H1 (cell line): ENCODE measurements at regions of chr17 and their contacts with region 1.

Region 1: DNA sequence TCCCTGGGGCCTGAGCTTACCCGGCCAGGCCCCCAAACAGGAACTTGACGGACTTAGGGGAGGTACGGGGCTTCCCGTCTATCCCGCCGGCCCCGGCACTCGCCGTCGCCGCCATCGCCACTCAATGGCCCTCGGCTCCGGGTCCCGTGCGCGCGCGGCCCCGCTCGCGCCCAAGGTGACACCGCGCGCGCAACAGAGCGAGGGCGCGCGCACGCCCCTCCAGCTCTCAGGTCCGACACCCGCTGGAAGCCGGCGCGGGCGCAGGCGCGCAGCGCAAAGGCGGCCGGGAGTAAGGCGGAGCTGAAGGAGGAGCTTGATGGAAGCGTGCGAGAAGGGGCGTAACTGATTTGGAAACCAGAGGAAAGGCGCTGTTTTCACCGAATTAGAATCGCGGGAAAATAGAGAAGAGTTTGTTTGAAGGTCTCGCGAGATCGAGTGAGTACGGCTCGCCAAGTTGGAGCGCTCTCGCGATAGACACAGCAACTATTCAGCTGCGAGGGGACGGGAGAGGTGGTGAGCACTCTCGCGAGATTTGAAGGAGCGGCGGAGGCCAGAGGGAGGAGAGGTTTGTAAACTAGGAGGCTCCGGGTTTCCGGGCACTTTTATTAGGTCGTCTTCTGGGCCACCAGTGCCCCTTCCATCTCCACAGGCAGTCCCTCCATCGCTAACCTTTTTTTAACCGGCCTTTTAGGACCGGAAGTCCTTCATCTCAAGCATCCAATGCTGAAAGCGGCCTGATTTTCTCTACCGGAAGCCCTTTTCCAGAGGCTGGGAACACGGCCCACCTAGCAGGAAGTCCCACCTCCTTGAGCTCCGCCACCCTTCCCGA is at the starts of genes RNF167 and SLC25A11:
- DNase-seq: peak; percentile 91 to 95
- H3K4me3 ChIP-seq: peak within 1 kb of the TSS; percentile 85 to 94 (median 90)
- H3K27ac ChIP-seq: peak within 1 kb of the TSS; percentile 88
- H3K4me1 ChIP-seq: peaks cover 0 to 11% (median 6%) of the 10 kb centered on the region in 4 experiments; a peak in 5 of 7 replicates
- H3K27me3 ChIP-seq: no peaks in the 10 kb centered on the region
- CTCF ChIP-seq: no peak
- EP300 ChIP-seq: no peak
- POLR2A ChIP-seq: peak; percentile 76 to 85
- RAD21 ChIP-seq: no peak
- total RNA-seq, gene RNF167: 140 and 147 TPM in 2 replicates
- total RNA-seq, gene SLC25A11: 55.9 and 65.2 TPM in 2 replicates

Region 2: DNA sequence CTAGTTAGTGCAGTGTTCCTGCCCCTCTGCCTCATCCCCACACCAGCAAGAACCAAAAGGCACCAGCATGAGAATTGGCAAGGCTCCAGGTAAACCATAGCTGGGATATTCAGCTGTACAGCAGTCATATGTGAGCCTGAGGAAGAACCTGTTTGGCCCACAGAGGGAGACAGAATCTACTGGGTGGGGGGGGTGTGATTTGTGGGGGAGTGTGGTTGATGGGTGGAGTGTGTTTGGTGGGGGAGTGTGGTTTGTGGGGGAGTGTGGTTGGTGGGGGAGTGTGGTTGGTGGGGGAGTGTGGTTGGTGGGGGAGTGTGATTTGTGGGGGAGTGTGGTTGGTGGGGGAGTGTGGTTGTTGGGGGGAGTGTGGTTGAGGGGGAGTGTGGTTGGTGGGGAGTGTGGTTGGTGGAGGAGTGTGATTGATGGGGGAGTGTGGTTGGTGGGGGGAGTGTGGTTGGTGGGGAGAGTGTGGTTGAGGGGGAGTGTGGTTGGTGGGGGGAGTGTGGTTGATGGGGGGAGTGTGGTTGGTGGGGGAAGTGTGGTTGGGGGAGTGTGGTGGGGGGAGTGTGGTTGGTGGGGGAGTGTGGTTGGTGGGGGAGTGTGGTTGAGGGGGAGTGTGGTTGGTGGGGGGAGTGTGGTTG is 87.3 kb before region 1 on chr17:
- CTCF ChIA-PET with region 1: no interaction called
- POLR2A ChIA-PET with region 1: no interaction called
- DNase-seq: no peak
- H3K4me3 ChIP-seq: no peak overlapping the region
- H3K27ac ChIP-seq: no peak overlapping the region
- H3K4me1 ChIP-seq: peaks cover 14 to 42% (median 35%) of the 10 kb centered on the region in 4 experiments
- H3K27me3 ChIP-seq: no peaks in the 10 kb centered on the region
- CTCF ChIP-seq: no peak
- EP300 ChIP-seq: no peak
- POLR2A ChIP-seq: no peak
- RAD21 ChIP-seq: no peak

Region 3: DNA sequence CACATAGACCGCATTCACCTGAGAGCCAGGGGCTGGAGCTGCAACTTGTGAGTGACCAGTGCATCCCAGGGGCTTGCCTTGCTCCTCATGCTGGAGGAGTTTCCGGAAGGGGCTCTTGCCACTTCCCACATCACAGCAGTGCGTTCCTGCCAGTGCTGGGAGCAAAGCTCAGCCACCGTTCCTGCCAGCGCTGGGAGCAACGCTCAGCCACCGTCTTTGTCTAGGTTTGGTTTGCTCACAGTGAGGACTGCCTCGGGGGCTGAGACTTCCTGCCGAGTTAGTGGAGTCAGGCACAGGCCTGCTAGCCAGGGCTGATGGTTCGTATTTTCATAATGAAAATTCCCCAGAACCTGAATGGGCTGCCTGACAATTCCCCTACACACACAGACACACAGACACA is 31.7 kb before region 1 on chr17:
- CTCF ChIA-PET with region 1: interaction called, 26 read pairs
- POLR2A ChIA-PET with region 1: interaction called, 49 read pairs
- DNase-seq: no peak
- H3K4me3 ChIP-seq: no peak overlapping the region
- H3K27ac ChIP-seq: no peak overlapping the region
- H3K4me1 ChIP-seq: peaks cover 2 to 12% (median 4%) of the 10 kb centered on the region in 4 experiments; a peak in 6 of 7 replicates
- H3K27me3 ChIP-seq: no peaks in the 10 kb centered on the region
- CTCF ChIP-seq: no peak
- EP300 ChIP-seq: no peak
- POLR2A ChIP-seq: no peak
- RAD21 ChIP-seq: no peak

Region 4: GRCh38 chr17:4920351-4921048 is 19.5 kb before region 1 on chr17:
- CTCF ChIA-PET with region 1: interaction called, 6 read pairs
- POLR2A ChIA-PET with region 1: interaction called, 38 read pairs
- DNase-seq: no peak
- H3K4me3 ChIP-seq: no peak overlapping the region
- H3K27ac ChIP-seq: no peak overlapping the region
- H3K4me1 ChIP-seq: peaks cover 0 to 5% (median 1%) of the 10 kb centered on the region in 4 experiments; a peak in 2 of 7 replicates
- H3K27me3 ChIP-seq: no peaks in the 10 kb centered on the region
- CTCF ChIP-seq: no peak
- EP300 ChIP-seq: no peak
- POLR2A ChIP-seq: no peak
- RAD21 ChIP-seq: no peak

Region 5: DNA sequence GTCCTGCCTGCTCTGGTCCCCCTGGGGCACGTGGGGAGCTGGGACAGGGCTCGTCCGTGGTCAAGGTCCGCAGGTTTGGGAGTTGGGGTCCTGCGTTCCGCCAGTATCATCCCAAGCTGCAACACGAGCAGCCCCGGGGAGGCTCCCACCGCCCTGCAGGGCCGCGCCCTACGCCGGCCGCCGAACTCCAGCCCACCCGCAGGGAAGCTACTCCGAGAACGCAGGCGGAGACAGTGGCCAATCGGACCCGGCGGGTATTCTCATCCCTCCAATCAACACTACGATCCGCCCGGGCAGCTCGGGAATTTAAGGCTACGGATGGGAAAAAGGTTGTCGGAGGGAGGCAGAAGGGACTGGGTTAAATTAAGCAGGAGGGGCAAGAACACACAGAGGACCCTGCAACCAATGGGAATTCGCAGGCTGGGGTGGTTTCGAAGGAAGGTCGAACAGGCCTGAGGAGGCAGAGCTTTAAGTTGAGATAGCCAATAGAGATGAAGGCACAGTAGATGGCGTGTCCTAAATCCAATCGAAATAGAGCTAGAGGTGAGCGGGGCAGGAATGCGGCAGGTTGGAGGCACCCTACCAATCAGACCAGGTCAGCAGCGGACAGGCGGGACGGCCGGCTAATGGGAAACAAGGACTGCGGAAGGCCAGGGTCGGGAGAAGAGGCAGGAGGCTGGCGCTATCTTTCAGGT is 27.0 kb after region 1 on chr17:
- CTCF ChIA-PET with region 1: interaction called, 6 read pairs
- POLR2A ChIA-PET with region 1: interaction called, 987 read pairs
- DNase-seq: peak; percentile 85 to 99
- H3K4me3 ChIP-seq: peak overlapping the region; percentile 71 to 90 (median 85)
- H3K27ac ChIP-seq: peak overlapping the region; percentile 96
- H3K4me1 ChIP-seq: peaks cover 2 to 14% (median 8%) of the 10 kb centered on the region in 4 experiments
- H3K27me3 ChIP-seq: peaks cover 0 to under 1% (median 0%) of the 10 kb centered on the region in 4 experiments; a peak in 2 of 7 replicates
- CTCF ChIP-seq: no peak
- EP300 ChIP-seq: no peak
- POLR2A ChIP-seq: no peak
- RAD21 ChIP-seq: no peak